Ovary (tissue), 10 donors: ENCODE measurements at regions of chr10 and their contacts with region 1.

Region 1: GRCh38 chr10:84264611-84265141 is 19.8 kb downstream of the RGR start:
- DNase-seq: peak; percentile 30 to 69 (median 62)
- H3K4me3 ChIP-seq: no peak overlapping the region
- H3K27ac ChIP-seq: no peak overlapping the region
- H3K4me1 ChIP-seq: peaks cover 1% of the 10 kb centered on the region
- H3K27me3 ChIP-seq: no peaks in the 10 kb centered on the region
- CTCF ChIP-seq: peak; percentile 58 to 79 (median 65)
- EP300 ChIP-seq: no peak
- POLR2A ChIP-seq: no peak

Region 2: DNA sequence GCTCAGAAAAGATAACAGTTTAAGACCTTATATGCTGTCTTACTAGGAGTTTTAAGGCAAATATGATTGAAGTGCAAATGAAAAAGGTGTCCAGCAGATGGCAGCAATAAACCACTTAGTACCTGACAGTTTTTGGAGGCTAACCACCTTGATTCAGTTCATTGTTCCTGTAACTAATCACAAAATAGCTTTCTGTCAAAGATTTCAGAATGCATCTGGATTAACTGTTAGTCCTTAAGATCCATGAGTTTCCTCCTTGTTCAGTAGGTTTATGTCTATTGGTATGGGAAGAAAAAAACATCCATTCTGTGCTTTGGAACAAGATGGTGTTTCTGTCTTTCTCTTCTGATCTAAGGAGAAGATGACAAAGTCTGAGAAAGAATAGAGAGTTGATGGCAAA is 110.3 kb after region 1 on chr10:
- intact Hi-C with region 1: loop called in 1 of 4 experiments (anchors 10 kb)
- DNase-seq: peak in 1 of 5 donors; percentile 37
- H3K4me3 ChIP-seq: no peak overlapping the region
- H3K27ac ChIP-seq: no peak overlapping the region
- H3K4me1 ChIP-seq: no peaks in the 10 kb centered on the region
- H3K27me3 ChIP-seq: no peaks in the 10 kb centered on the region
- CTCF ChIP-seq: peak in 2 of 3 donors; percentile 54 to 60
- EP300 ChIP-seq: no peak
- POLR2A ChIP-seq: no peak